ENCODE measurements at regions of chr14 and their contacts with region 1.

Region 1: DNA sequence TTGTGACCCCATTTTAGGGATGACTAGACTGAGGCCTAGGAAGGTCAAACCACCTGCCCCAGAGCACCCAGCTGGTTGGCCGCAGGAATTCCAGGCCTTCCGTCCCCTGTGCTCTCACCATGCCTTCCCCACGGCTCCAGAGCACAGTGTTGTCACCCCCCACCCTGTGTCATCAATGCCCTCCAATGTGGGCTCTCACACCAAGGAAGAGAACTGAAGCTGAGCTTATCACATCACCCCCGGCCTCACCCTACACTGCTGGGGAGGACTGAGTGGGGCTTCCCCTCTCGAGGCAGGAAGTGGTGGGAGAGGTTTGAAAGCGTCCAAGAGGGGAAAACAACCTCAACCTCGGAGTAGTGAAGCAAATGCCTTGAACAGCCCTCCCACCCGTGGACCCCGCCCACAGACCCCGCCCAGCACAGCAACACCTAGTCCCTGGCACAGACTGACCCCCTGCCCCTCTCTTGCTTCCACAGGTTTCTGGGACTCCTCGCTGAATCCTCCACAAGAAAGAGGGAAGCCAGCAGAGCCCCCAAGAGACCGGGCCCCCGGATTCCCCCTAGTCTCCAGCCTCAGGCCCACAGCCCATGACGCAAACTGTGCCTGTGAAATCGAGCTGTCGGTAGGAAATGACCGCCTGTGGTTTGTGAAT is 97.2 kb downstream of the LGMN start:
- DNase-seq: peak; percentile 76
- H3K4me3 Mint-ChIP-seq: peak overlapping the region; percentile 96
- H3K27ac Mint-ChIP-seq: peak overlapping the region; percentile 94
- H3K4me1 Mint-ChIP-seq: peaks cover 76% of the 10 kb centered on the region
- H3K27me3 Mint-ChIP-seq: no peaks in the 10 kb centered on the region

Region 2: DNA sequence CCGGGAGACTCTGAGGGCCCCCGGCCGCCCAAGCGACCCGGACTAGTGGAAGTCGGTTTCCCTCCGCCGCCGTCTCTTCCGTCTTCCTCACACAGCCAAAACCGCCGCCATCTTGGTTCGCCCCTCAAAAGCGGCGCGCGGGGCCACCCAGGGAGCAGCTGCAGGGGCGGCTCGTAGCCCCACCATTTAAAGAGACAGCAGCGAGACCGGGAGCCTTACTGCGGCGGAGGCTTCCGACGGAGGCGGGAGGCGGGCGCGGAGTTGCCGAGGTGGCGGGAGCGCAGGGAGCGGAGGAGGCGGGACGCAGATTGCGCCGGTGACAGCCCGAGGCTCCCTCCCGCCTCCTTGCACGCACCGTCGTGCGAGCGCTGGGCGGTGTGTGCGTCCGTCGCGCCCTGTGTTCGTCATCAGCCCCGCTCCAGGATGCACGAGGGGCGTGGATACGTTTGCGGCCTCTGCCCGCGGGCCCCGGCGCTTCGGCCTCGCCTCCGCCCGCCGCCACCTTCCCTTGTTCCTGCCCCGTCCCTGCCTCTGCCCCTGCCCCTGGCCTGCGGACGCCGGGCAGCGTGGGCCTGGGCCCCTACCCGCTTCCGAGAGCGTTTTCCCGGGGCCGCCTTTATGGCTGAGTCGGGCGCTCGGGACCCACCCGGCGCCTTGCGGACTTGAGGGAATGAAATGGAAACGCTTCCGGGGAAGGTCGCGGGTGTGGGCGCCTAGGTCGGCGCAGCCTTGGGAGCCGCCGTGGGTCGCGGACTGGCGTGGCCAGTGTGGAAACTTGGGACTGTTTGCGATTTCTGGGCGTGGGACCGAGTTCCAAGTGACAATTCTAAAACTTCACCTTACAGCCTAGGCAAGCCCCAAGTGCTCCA is 1140.8 kb before region 1 on chr14 and contains the start of gene PPP4R3A:
- intact Hi-C with region 1: loop called (anchors 5 kb)
- DNase-seq: peak; percentile 91
- H3K4me3 Mint-ChIP-seq: peak within 1 kb of the TSS; percentile 98
- H3K27ac Mint-ChIP-seq: peak within 1 kb of the TSS; percentile 100
- H3K4me1 Mint-ChIP-seq: peaks cover 29% of the 10 kb centered on the region
- H3K27me3 Mint-ChIP-seq: peaks cover 5% of the 10 kb centered on the region
- total RNA-seq, gene PPP4R3A: 130 and 144 TPM in 2 replicates

Region 3: DNA sequence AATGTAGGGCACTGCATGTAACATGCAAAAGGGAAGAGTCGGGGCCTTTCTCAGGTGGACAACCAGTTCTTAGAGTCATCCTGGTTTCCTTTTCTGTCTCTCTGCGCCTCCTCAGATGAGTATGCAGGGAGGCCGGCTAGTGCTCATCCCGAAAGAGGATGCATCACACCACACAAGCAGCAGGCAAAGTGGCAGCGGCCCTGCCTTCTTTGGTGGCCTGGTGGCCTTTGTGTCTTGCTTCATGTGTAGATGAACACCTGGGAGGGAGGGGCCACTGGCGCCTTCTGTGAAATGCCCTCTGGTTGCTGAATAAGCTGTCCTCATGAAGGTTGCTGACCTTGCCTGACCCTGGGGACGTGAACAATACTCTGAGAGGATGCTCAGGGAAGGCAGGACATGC is 310.3 kb before region 1 on chr14:
- intact Hi-C with region 1: loop called (anchors 1 kb)
- DNase-seq: no peak
- H3K4me3 Mint-ChIP-seq: peak overlapping the region; percentile 16
- H3K27ac Mint-ChIP-seq: peak overlapping the region; percentile 53
- H3K4me1 Mint-ChIP-seq: peaks cover 17% of the 10 kb centered on the region
- H3K27me3 Mint-ChIP-seq: peaks cover 30% of the 10 kb centered on the region

Region 4: DNA sequence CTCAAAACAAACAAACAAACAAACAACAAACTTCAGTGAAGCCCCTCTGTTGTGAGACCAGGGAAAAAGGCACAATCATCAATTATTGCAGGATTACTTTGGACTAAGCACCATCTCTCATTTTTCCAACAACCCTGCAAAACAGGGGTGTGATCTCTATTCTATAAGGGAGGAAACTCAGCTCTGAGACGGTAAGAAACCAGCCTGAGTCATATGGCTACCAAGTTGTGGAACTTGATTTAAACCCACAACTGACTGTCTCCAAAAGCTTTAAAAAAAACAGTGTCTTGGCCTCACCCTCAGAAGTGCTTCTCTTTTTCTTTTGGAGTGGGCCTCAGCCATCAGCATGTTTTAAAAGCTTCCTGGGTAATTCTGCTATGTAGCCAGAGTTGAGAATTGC is 87.9 kb before region 1 on chr14:
- intact Hi-C with region 1: loop called (anchors 1 kb)
- DNase-seq: peak; percentile 38
- H3K4me3 Mint-ChIP-seq: no peak overlapping the region
- H3K27ac Mint-ChIP-seq: peak overlapping the region; percentile 10
- H3K4me1 Mint-ChIP-seq: peaks cover 73% of the 10 kb centered on the region
- H3K27me3 Mint-ChIP-seq: no peaks in the 10 kb centered on the region

Region 5: GRCh38 chr14:92612988-92613658 is 38.1 kb before region 1 on chr14:
- intact Hi-C with region 1: loop called (anchors 1 kb)
- DNase-seq: peak; percentile 20
- H3K4me3 Mint-ChIP-seq: no peak overlapping the region
- H3K27ac Mint-ChIP-seq: no peak overlapping the region
- H3K4me1 Mint-ChIP-seq: peaks cover 51% of the 10 kb centered on the region
- H3K27me3 Mint-ChIP-seq: peaks cover 3% of the 10 kb centered on the region

Region 6: DNA sequence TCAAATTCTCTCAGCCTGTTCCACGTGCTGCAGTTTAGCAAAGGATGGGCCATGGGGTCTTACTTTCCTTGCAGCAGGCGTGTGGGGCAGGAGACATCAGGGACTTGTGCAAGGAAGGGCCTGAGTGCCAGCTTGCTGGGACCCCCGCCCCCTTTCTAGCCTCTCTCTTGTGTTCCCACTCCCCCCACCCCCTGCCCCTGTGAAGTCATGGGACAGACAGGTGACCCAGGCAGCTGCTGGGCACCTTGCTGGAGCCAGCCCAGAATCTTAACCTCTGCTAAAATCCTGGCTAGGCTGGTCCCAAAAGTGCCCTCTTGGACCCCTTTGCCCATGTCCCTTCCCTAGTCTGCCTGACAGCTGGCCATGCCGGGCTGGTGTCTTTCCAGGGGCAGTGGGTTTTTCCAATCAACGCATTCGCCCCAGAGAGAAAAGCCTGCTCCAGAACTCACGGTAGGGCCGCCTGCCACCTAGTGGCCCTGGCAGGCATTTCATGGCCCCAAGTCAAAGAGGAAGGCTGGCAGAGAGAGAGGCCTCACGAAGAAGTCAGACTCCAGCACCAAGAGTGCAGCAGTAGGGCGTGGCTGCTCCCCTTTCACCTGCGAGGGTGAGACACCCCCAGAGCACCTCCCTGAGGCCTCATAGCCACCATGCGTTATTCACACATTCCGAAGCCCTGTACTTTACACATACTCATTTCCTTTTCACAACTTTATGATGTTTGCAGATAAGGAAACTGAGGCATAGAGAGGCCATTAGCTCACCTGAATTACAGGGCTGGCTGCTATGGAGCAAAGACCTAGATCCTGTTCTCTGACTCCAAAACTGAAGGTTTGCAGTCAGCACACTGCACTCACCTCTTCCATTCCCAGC is 29.8 kb after region 1 on chr14:
- intact Hi-C with region 1: loop called (anchors 1 kb)
- DNase-seq: peak; percentile 66
- H3K4me3 Mint-ChIP-seq: no peak overlapping the region
- H3K27ac Mint-ChIP-seq: no peak overlapping the region
- H3K4me1 Mint-ChIP-seq: peaks cover 43% of the 10 kb centered on the region
- H3K27me3 Mint-ChIP-seq: no peaks in the 10 kb centered on the region

Measured in activated T-helper 1 cell treated with anti-CD3 and anti-CD28 coated beads, Interleukin-12 subunit alpha, Interleukin-12 subunit beta, Interleukin-2, Interleukin-4 antibody, amounts not matched to agents 30 ng/mL and 10 ng/mL and 1 ng/mL, durations not matched to agents 14 hours and 24 hours and 36 hours (primary cell).